ENCODE measurements at regions of chr9 and their contacts with region 1.

Region 1: GRCh38 chr9:137223078-137223970 is 1.3 kb upstream of the RNF208 start:
- DNase-seq: peak; percentile 98
- H3K4me3 ChIP-seq: peak overlapping the region; percentile 80 to 91 (median 82)
- H3K27ac ChIP-seq: peak overlapping the region; percentile 68
- H3K4me1 ChIP-seq: peaks cover 18% of the 10 kb centered on the region
- H3K27me3 ChIP-seq: no peaks in the 10 kb centered on the region
- CTCF ChIP-seq: no peak
- POLR2A ChIP-seq: peak; percentile 78

Region 2: DNA sequence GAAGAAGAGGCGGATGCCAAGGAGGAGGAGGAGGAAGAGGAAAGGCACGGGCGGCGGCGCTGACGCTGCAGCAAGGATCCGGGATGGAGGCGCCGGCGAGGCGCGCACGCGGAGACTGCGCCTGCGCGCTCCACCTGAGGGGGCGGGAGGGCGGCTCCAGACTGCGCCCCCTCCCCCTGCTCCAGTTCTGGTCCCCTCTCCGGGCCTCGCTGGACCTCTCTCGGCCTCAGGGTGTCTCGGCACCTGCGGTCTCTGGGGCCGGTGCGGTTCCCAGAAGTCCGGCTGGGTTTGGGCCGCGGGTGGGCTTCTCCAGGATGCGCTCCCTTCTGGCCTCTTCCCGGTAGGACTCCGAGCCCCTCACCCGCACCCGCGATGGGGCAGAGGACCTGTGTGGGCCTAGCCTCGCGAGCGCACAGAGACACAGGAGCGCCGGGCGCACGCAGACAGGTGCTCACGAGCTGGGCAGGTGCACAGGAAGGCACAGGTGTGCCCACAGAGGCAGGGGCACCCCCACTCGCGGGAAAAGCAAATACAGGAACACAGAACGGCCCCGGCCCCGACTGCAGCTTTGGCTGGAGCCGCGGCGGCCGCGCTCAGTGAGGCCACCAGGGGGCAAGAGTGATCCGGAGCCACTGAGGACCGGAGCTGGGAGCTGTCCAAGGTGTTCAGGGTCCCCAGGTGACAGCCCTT is 177.1 kb before region 1 on chr9 and contains the start of gene NPDC1:
- CTCF ChIA-PET with region 1: interaction called, 21 read pairs
- POLR2A ChIA-PET with region 1: no interaction called
- dilution Hi-C with region 1: no loop called
- intact Hi-C with region 1: loop called (anchors 1 kb)
- DNase-seq: peak; percentile 79
- H3K4me3 ChIP-seq: peak within 1 kb of the TSS; percentile 44 to 57 (median 54)
- H3K27ac ChIP-seq: peak within 1 kb of the TSS; percentile 41
- H3K4me1 ChIP-seq: peaks cover 35% of the 10 kb centered on the region
- H3K27me3 ChIP-seq: peaks cover 0 to 3% of the 10 kb centered on the region in 2 experiments
- CTCF ChIP-seq: peak; percentile 94 to 96
- POLR2A ChIP-seq: peak; percentile 63
- total RNA-seq, gene NPDC1: 157 and 181 TPM in 2 replicates

Region 3: DNA sequence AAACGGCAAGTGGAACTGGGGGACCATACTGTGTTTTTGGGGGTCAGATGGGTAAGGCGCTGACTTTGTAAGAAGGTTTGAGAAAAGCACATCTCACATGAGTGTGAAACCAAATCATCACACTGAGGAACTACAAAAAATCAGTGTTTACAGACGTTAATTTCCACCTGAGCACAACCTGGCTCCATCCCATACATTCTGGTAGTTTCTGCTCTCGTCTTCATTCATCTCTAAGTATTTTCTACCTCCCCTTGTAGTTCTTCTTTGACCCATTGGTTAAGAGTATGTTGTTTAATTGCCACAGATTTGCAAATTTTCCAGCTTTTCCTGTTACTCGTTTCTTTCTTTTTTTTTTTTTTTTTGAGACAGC is 99.9 kb before region 1 on chr9:
- CTCF ChIA-PET with region 1: interaction called, 42 read pairs
- POLR2A ChIA-PET with region 1: no interaction called
- dilution Hi-C with region 1: no loop called
- intact Hi-C with region 1: loop called (anchors 1 kb)
- DNase-seq: no peak
- H3K4me3 ChIP-seq: no peak overlapping the region
- H3K27ac ChIP-seq: no peak overlapping the region
- H3K4me1 ChIP-seq: peaks cover 15% of the 10 kb centered on the region
- H3K27me3 ChIP-seq: no peaks in the 10 kb centered on the region
- CTCF ChIP-seq: no peak
- POLR2A ChIP-seq: no peak

Region 4: GRCh38 chr9:137138722-137139467 is 84.4 kb before region 1 on chr9 and contains the start of gene GRIN1:
- CTCF ChIA-PET with region 1: no interaction called
- POLR2A ChIA-PET with region 1: no interaction called
- dilution Hi-C with region 1: no loop called
- intact Hi-C with region 1: no loop called
- DNase-seq: no peak
- H3K4me3 ChIP-seq: no peak within 1 kb of the TSS
- H3K27ac ChIP-seq: no peak within 1 kb of the TSS
- H3K4me1 ChIP-seq: no peaks in the 10 kb centered on the region
- H3K27me3 ChIP-seq: peaks cover 35 to 36% of the 10 kb centered on the region in 2 experiments
- CTCF ChIP-seq: no peak
- POLR2A ChIP-seq: no peak
- total RNA-seq, gene GRIN1: not detected in 2 replicates

Region 5: GRCh38 chr9:137176302-137177182 is 46.8 kb before region 1 on chr9:
- CTCF ChIA-PET with region 1: interaction called, 10 read pairs
- POLR2A ChIA-PET with region 1: no interaction called
- dilution Hi-C with region 1: no loop called
- intact Hi-C with region 1: loop called (anchors 2 kb)
- DNase-seq: peak; percentile 20
- H3K4me3 ChIP-seq: no peak overlapping the region
- H3K27ac ChIP-seq: no peak overlapping the region
- H3K4me1 ChIP-seq: peaks cover 6% of the 10 kb centered on the region
- H3K27me3 ChIP-seq: no peaks in the 10 kb centered on the region
- CTCF ChIP-seq: peak; percentile 48 to 66
- POLR2A ChIP-seq: no peak

Region 6: GRCh38 chr9:137200311-137201204 is 22.8 kb before region 1 on chr9 and contains the start of gene TPRN:
- CTCF ChIA-PET with region 1: interaction called, 9 read pairs
- POLR2A ChIA-PET with region 1: interaction called, 10 read pairs
- dilution Hi-C with region 1: no loop called
- intact Hi-C with region 1: loop called (anchors 1 kb)
- DNase-seq: peak; percentile 98
- H3K4me3 ChIP-seq: peak within 1 kb of the TSS in 2 of 3 experiments; percentile 27 to 80
- H3K27ac ChIP-seq: no peak within 1 kb of the TSS
- H3K4me1 ChIP-seq: peaks cover 21% of the 10 kb centered on the region
- H3K27me3 ChIP-seq: no peaks in the 10 kb centered on the region
- CTCF ChIP-seq: no peak
- POLR2A ChIP-seq: peak; percentile 98
- total RNA-seq, gene TPRN: 12.1 and 12.4 TPM in 2 replicates

Measured in endothelial cell of umbilical vein (primary cell).